Vagina (tissue), 2 donors: ENCODE measurements at regions of chr11 and their contacts with region 1.

Region 1: DNA sequence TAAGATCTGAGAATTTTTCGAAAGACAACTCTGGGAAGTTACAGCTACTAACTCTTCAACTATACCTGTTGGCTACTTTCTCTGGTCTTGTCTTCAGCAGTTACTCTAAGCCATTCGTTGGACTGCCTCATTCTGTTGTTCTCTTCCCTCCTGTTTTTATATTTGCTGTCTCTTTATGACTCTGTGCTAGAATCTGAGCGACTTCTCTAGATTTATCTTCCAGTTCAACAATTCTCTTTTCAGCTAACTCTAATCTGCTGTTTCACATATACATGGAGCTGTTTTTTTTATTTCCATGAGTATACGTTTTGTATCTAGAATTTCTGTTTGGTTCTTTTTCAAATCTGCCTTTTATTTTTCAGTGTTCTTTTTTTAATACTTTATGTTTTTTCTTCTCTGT is 127.4 kb upstream of the SORL1-AS1 start:
- DNase-seq: no peak
- H3K4me3 ChIP-seq: no peak overlapping the region
- H3K27ac ChIP-seq: no peak overlapping the region
- H3K4me1 ChIP-seq: peaks cover 43% of the 10 kb centered on the region
- H3K27me3 ChIP-seq: no peaks in the 10 kb centered on the region
- CTCF ChIP-seq: no peak
- POLR2A ChIP-seq: no peak

Region 2: GRCh38 chr11:121557348-121557747 is 22.8 kb before region 1 on chr11:
- intact Hi-C with region 1: loop called (anchors 1 kb)
- DNase-seq: no peak
- H3K4me3 ChIP-seq: no peak overlapping the region
- H3K27ac ChIP-seq: no peak overlapping the region
- H3K4me1 ChIP-seq: no peaks in the 10 kb centered on the region
- H3K27me3 ChIP-seq: no peaks in the 10 kb centered on the region
- CTCF ChIP-seq: no peak
- POLR2A ChIP-seq: no peak